ENCODE measurements at regions of chr1 and their contacts with region 1.

Region 1: GRCh38 chr1:150363426-150364230 is at the start of gene RPRD2:
- DNase-seq: peak; percentile 98 to 100 (median 99)
- H3K4me3 ChIP-seq: peak within 1 kb of the TSS; percentile 94
- H3K4me3 Mint-ChIP-seq: peak within 1 kb of the TSS; percentile 93 to 100 (median 98)
- H3K27ac ChIP-seq: peak within 1 kb of the TSS; percentile 89
- H3K27ac Mint-ChIP-seq: peak within 1 kb of the TSS; percentile 93 to 100 (median 98)
- H3K4me1 ChIP-seq: peaks cover 13% of the 10 kb centered on the region
- H3K4me1 Mint-ChIP-seq: peaks cover 24 to 39% (median 35%) of the 10 kb centered on the region in 3 donors
- H3K27me3 ChIP-seq: no peaks in the 10 kb centered on the region
- H3K27me3 Mint-ChIP-seq: peaks cover 0 to 5% of the 10 kb centered on the region in 2 donors
- total RNA-seq, gene RPRD2: 24.1 to 26.4 TPM

Region 2: GRCh38 chr1:150235852-150236613 is 127.6 kb before region 1 on chr1 and contains the start of gene ANP32E:
- CTCF ChIA-PET with region 1: no interaction called
- POLR2A ChIA-PET with region 1: interaction called, 18 read pairs
- DNase-seq: peak; percentile 87 to 98 (median 97)
- H3K4me3 ChIP-seq: peak within 1 kb of the TSS; percentile 96
- H3K4me3 Mint-ChIP-seq: peak within 1 kb of the TSS in 1 of 7 donors; percentile 93
- H3K27ac ChIP-seq: peak within 1 kb of the TSS; percentile 98
- H3K27ac Mint-ChIP-seq: peak within 1 kb of the TSS in 6 of 8 donors; percentile 95 to 99 (median 97)
- H3K4me1 ChIP-seq: peaks cover 18% of the 10 kb centered on the region
- H3K4me1 Mint-ChIP-seq: peaks cover 17 to 25% (median 17%) of the 10 kb centered on the region in 3 donors
- H3K27me3 ChIP-seq: no peaks in the 10 kb centered on the region
- H3K27me3 Mint-ChIP-seq: peaks cover 0 to 4% of the 10 kb centered on the region in 2 donors
- total RNA-seq, gene ANP32E: 154 TPM

Region 3: DNA sequence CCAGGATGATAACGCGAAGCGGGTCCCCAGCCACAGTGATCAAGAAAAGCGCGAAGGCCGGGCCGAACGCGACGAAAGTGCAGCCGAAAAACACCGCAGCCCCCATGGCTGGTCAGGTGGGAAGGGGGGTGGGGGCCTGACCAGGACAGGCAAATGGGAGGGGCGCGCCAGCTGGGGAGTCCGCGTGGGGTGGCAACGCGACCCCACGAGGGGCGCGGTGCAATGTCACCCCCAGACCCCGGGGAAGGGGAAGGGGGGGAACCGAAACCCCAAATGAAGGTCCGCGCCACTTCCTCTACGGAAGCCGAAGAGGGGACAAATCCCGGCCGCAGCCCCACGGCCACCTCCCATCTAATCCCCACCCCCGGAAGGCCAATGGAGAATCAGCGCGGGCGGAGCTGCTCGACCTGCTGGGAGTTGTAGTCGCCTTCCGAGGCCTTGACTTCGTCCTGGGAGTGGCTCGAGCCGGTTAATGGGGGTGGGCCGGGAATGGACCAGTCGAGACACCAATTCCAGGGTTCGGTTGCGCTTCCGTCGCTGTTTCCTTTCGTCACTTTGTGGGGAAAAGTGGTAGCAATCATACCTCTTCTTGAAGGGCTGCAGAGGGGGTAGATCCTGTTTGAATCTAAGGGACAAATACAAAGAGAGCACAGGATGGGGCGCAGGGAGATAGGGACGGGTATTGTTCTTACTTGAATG is 94.8 kb before region 1 on chr1 and contains the start of gene APH1A:
- CTCF ChIA-PET with region 1: no interaction called
- POLR2A ChIA-PET with region 1: interaction called, 11 read pairs
- DNase-seq: peak; percentile 87 to 95 (median 88)
- H3K4me3 ChIP-seq: peak within 1 kb of the TSS; percentile 77
- H3K4me3 Mint-ChIP-seq: peak within 1 kb of the TSS; percentile 91 to 98 (median 93)
- H3K27ac ChIP-seq: peak within 1 kb of the TSS; percentile 94
- H3K27ac Mint-ChIP-seq: peak within 1 kb of the TSS; percentile 88 to 100 (median 97)
- H3K4me1 ChIP-seq: peaks cover 24% of the 10 kb centered on the region
- H3K4me1 Mint-ChIP-seq: peaks cover 24 to 35% (median 32%) of the 10 kb centered on the region in 3 donors
- H3K27me3 ChIP-seq: no peaks in the 10 kb centered on the region
- H3K27me3 Mint-ChIP-seq: peaks cover 0 to 5% of the 10 kb centered on the region in 2 donors
- total RNA-seq, gene APH1A: 139 to 140 TPM

Region 4: GRCh38 chr1:150321826-150322166 is 41.8 kb before region 1 on chr1:
- CTCF ChIA-PET with region 1: no interaction called
- POLR2A ChIA-PET with region 1: interaction called, 11 read pairs
- DNase-seq: peak in 2 of 5 donors; percentile 6 to 18
- H3K4me3 ChIP-seq: peak overlapping the region; percentile 79
- H3K4me3 Mint-ChIP-seq: peak overlapping the region; percentile 94 to 100 (median 99)
- H3K27ac ChIP-seq: peak overlapping the region; percentile 97
- H3K27ac Mint-ChIP-seq: peak overlapping the region; percentile 88 to 100 (median 99)
- H3K4me1 ChIP-seq: peaks cover 19% of the 10 kb centered on the region
- H3K4me1 Mint-ChIP-seq: peaks cover 33 to 54% (median 43%) of the 10 kb centered on the region in 3 donors
- H3K27me3 ChIP-seq: no peaks in the 10 kb centered on the region
- H3K27me3 Mint-ChIP-seq: peaks cover 0 to 4% of the 10 kb centered on the region in 2 donors

Region 5: DNA sequence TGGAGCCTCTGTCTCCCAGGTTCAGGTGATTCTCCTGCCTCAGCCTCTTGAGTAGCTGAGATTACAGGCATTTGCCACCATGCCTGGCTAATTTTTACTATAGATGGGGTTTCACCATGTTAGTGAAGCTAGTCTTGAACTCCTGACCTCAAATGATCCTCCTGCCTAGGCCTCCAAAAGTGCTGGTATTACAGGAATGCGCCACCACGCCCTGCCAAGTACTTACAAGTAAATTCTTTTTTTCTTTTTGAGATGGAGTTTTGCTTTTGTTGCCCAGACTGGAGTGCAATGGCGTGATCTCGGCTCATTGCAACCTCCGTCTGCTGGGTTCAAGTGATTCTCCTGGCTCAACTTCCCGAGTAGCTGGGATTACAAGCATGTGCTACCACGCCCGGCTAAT is 42.9 kb after region 1 on chr1:
- CTCF ChIA-PET with region 1: no interaction called
- POLR2A ChIA-PET with region 1: no interaction called
- DNase-seq: no peak
- H3K4me3 ChIP-seq: no peak overlapping the region
- H3K4me3 Mint-ChIP-seq: no peak overlapping the region
- H3K27ac ChIP-seq: no peak overlapping the region
- H3K27ac Mint-ChIP-seq: no peak overlapping the region
- H3K4me1 ChIP-seq: peaks cover 9% of the 10 kb centered on the region
- H3K4me1 Mint-ChIP-seq: peaks cover 54 to 80% (median 70%) of the 10 kb centered on the region in 3 donors
- H3K27me3 ChIP-seq: no peaks in the 10 kb centered on the region
- H3K27me3 Mint-ChIP-seq: no peaks in the 10 kb centered on the region

Region 6: DNA sequence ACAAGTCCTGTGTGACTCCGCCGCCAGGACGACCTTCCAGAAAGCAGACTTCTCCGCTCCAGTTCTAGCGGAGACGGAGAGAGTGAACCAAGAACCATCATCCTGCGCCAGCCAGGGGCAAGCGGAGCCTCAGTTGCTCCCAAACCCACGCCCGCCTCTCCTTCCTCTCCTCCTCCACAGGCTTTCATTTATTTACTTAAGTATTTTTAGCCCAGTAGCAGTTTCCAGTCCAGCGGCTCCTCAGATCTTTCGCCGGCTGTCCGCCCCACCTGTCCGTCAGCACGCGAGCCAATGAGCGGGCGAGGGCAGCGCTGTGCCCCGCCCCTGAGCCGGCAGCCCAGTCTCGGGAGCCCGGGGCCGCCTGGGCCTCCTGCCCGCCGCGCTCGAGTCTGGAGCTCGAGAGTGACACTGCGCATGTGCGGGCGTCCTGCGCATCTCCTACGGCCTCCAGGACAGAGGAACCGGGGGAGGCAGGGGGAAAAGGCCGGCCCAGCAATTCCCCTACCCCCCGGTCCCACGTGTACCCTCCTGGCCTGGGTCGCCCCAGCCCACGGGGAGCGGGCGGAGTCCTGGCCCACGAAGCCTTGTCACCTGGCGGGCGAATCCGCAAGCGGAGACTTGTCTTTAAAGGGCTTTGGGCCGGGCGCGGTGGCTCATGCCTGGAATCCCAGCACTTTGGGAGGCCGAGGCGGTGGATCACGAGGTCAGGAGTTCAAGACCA is 151.9 kb after region 1 on chr1 and contains the start of gene FALEC:
- CTCF ChIA-PET with region 1: no interaction called
- POLR2A ChIA-PET with region 1: interaction called, 11 read pairs
- DNase-seq: peak; percentile 87 to 93 (median 89)
- H3K4me3 ChIP-seq: peak within 1 kb of the TSS; percentile 80
- H3K4me3 Mint-ChIP-seq: peak within 1 kb of the TSS; percentile 87 to 94 (median 92)
- H3K27ac ChIP-seq: peak within 1 kb of the TSS; percentile 61
- H3K27ac Mint-ChIP-seq: peak within 1 kb of the TSS; percentile 50 to 96 (median 81)
- H3K4me1 ChIP-seq: peaks cover 10% of the 10 kb centered on the region
- H3K4me1 Mint-ChIP-seq: peaks cover 12 to 19% (median 16%) of the 10 kb centered on the region in 3 donors
- H3K27me3 ChIP-seq: no peaks in the 10 kb centered on the region
- H3K27me3 Mint-ChIP-seq: peaks cover 0 to 2% of the 10 kb centered on the region in 2 donors
- total RNA-seq, gene FALEC: not detected